ENCODE measurements at regions of chr3 and their contacts with region 1.

Region 1: GRCh38 chr3:101803173-101803782 is 24.3 kb downstream of the NXPE3 start:
- DNase-seq: peak; percentile 50
- H3K4me3 ChIP-seq: no peak overlapping the region
- H3K27ac ChIP-seq: no peak overlapping the region
- H3K4me1 ChIP-seq: no peaks in the 10 kb centered on the region
- H3K27me3 ChIP-seq: no peaks in the 10 kb centered on the region
- CTCF ChIP-seq: peak; percentile 83 to 92

Region 2: GRCh38 chr3:101695779-101696372 is 107.4 kb before region 1 on chr3:
- CTCF ChIA-PET with region 1: no interaction called
- dilution Hi-C with region 1: no loop called
- in situ Hi-C with region 1: no loop called
- intact Hi-C with region 1: loop called (anchors 1 kb)
- DNase-seq: peak; percentile 38
- H3K4me3 ChIP-seq: no peak overlapping the region
- H3K27ac ChIP-seq: no peak overlapping the region
- H3K4me1 ChIP-seq: no peaks in the 10 kb centered on the region
- H3K27me3 ChIP-seq: no peaks in the 10 kb centered on the region
- CTCF ChIP-seq: peak; percentile 45 to 64

Region 3: GRCh38 chr3:102089239-102089638 is 286.0 kb after region 1 on chr3:
- CTCF ChIA-PET with region 1: interaction called, 12 read pairs
- dilution Hi-C with region 1: no loop called
- in situ Hi-C with region 1: no loop called
- intact Hi-C with region 1: no loop called
- DNase-seq: no peak
- H3K4me3 ChIP-seq: no peak overlapping the region
- H3K27ac ChIP-seq: no peak overlapping the region
- H3K4me1 ChIP-seq: no peaks in the 10 kb centered on the region
- H3K27me3 ChIP-seq: no peaks in the 10 kb centered on the region
- CTCF ChIP-seq: no peak